Activated B cell treated with CpG ODN at 0.5 μM for 24 hours (primary cell): ENCODE measurements at regions of chr1 and their contacts with region 1.

Region 1: GRCh38 chr1:106022312-106022902 is 1034.1 kb upstream of the PRMT6 start:
- DNase-seq: no peak
- ATAC-seq: no peak
- H3K4me3 Mint-ChIP-seq: no peak overlapping the region
- H3K27ac Mint-ChIP-seq: no peak overlapping the region
- H3K4me1 Mint-ChIP-seq: no peaks in the 10 kb centered on the region
- H3K27me3 Mint-ChIP-seq: no peaks in the 10 kb centered on the region
- CTCF ChIP-seq: no peak

Region 2: DNA sequence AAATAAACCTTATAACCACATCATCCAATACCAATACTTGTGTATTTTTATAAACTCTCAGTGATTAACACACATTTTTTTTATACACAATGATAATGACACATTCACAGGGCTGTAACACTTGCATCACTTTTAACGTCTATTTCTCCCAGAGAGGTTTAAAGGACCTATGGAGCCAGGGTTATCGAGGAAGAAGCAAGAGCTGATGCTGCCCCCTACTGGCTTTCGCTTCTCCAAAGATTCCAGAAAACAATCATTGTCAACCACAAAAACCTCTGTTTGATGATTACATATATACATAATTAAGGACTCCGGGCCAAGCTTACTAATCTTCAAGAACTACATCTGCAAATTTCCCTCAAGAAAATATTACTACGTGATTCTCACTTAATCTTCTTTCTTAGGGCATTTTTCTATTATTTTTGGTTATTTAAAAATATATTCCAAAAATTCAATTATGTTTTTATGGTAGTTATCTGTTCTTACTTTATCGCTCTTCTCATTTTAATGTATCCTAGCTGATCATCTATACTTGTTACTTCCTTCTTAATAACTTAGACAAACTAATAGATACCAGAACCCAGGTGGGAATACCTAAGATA is 1728.1 kb after region 1 on chr1:
- CTCF ChIA-PET with region 1: no interaction called
- POLR2A ChIA-PET with region 1: no interaction called
- intact Hi-C with region 1: loop called (anchors 2 kb)
- DNase-seq: no peak
- ATAC-seq: no peak
- H3K4me3 Mint-ChIP-seq: no peak overlapping the region
- H3K27ac Mint-ChIP-seq: no peak overlapping the region
- H3K4me1 Mint-ChIP-seq: peaks cover 2% of the 10 kb centered on the region
- H3K27me3 Mint-ChIP-seq: no peaks in the 10 kb centered on the region
- CTCF ChIP-seq: no peak